Activated B cell treated with CpG ODN at 0.5 μM for 24 hours (primary cell): ENCODE measurements at regions of chr3 and their contacts with region 1.

Region 1: DNA sequence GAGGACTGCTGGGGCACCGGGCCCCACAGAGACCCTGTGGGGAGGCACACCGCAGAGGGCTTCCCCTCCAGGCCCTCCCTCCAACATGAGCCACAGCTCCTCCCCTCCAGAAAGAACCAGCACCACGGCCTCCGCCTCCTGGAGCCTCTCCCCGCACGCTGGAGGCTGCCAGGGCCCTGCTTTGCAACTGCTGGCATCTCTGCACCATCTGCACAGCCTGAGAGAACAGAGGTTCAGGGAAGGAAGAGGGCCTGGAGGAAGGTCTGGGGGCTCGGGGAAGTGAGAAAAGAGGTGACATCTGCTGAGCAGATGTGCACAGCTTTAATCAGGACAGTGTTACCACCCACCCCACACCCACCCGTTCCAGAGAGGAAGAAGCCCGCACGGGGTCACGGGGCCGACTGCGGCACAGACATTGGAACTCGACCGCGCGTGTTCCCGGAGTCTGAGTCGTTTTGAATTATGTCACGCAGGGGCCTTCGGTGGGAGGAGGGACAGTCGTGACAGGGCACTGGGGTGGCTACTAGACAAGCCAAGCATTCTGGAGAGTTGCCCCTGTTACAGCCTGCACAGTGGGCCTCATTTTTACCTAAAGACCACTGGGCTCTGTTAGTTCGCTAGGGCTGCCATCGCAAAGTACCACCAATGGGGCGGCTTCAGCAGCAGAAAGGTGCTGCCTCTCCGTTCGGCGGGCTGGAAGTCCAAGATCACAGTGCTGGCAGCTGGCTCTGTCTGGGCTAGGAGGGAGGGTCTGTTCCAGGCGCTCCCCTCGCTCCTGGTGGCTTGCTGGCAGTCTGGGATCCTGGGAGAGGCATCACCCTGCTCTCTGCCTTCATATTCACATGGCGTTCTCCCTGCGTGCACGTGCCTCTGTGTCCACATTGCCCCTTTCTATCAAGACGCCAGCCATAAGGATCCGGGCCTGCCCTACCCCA is 194.8 kb downstream of the XXYLT1 start:
- DNase-seq: no peak
- ATAC-seq: no peak
- H3K4me3 Mint-ChIP-seq: no peak overlapping the region
- H3K27ac Mint-ChIP-seq: no peak overlapping the region
- H3K4me1 Mint-ChIP-seq: peaks cover 26% of the 10 kb centered on the region
- H3K27me3 Mint-ChIP-seq: no peaks in the 10 kb centered on the region
- CTCF ChIP-seq: no peak

Region 2: GRCh38 chr3:195101001-195101583 is 24.9 kb after region 1 on chr3:
- CTCF ChIA-PET with region 1: no interaction called
- POLR2A ChIA-PET with region 1: interaction called, 11 read pairs
- intact Hi-C with region 1: no loop called
- DNase-seq: no peak
- ATAC-seq: peak; percentile 66
- H3K4me3 Mint-ChIP-seq: peak overlapping the region; percentile 52
- H3K27ac Mint-ChIP-seq: peak overlapping the region; percentile 91
- H3K4me1 Mint-ChIP-seq: peaks cover 77% of the 10 kb centered on the region
- H3K27me3 Mint-ChIP-seq: no peaks in the 10 kb centered on the region
- CTCF ChIP-seq: no peak